Thyroid gland (tissue), 4 donors: ENCODE measurements at regions of chr6 and their contacts with region 1.

Region 1: GRCh38 chr6:154675602-154676088 is 57.6 kb upstream of the SCAF8 start:
- DNase-seq: peak; percentile 87 to 90
- H3K4me3 ChIP-seq: no peak overlapping the region
- H3K27ac ChIP-seq: no peak overlapping the region
- H3K4me1 ChIP-seq: no peaks in the 10 kb centered on the region
- H3K27me3 ChIP-seq: no peaks in the 10 kb centered on the region
- CTCF ChIP-seq: peak; percentile 96 to 100 (median 99)
- POLR2A ChIP-seq: no peak

Region 2: GRCh38 chr6:154733012-154733625 is 57.5 kb after region 1 on chr6 and contains the start of gene SCAF8:
- intact Hi-C with region 1: loop called (anchors 10 kb)
- DNase-seq: peak; percentile 75 to 81
- H3K4me3 ChIP-seq: peak within 1 kb of the TSS; percentile 89 to 99 (median 98)
- H3K27ac ChIP-seq: peak within 1 kb of the TSS; percentile 100
- H3K4me1 ChIP-seq: peaks cover 25 to 38% of the 10 kb centered on the region in 2 donors
- H3K27me3 ChIP-seq: no peaks in the 10 kb centered on the region
- CTCF ChIP-seq: peak; percentile 32 to 97 (median 82)
- POLR2A ChIP-seq: peak in 1 of 2 donors; percentile 73
- total RNA-seq, gene SCAF8: 60.9 to 88.8 (median 65.1) TPM

Region 3: GRCh38 chr6:154805288-154805911 is 129.8 kb after region 1 on chr6:
- intact Hi-C with region 1: loop called (anchors 5 kb)
- DNase-seq: no peak
- H3K4me3 ChIP-seq: no peak overlapping the region
- H3K27ac ChIP-seq: no peak overlapping the region
- H3K4me1 ChIP-seq: peaks cover 3 to 8% of the 10 kb centered on the region in 2 donors
- H3K27me3 ChIP-seq: no peaks in the 10 kb centered on the region
- CTCF ChIP-seq: peak in 5 of 6 experiments; percentile 10 to 64 (median 45)
- POLR2A ChIP-seq: no peak

Region 4: DNA sequence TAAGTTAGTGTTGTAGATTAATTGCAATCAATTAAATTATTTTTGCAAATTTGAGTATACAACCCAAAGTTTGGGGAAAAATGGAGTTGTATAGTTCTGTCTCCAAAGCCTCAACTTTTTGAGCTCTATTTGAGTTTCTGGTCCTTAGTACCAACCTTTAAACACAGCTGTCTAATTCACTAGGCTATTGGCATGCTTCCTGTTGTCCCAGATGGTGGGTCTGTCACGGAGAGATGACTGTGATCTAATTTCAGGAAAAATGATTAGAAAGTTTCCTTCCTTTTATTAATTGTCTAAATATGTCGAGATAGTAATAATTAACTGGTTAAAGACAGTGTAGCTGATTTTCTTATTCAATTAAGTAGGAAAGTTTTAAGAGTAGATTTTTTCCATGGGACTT is 167.2 kb after region 1 on chr6:
- intact Hi-C with region 1: no loop called
- DNase-seq: no peak
- H3K4me3 ChIP-seq: no peak overlapping the region
- H3K27ac ChIP-seq: peak overlapping the region in 1 of 3 donors; percentile 59
- H3K4me1 ChIP-seq: peaks cover 31 to 34% of the 10 kb centered on the region in 2 donors
- H3K27me3 ChIP-seq: no peaks in the 10 kb centered on the region
- CTCF ChIP-seq: no peak
- POLR2A ChIP-seq: no peak